Dendritic cell treated with granulocyte-macrophage colony-stimulating factor and Interleukin-4, amounts not matched to agents 40 ng/mL and 50 ng/mL, for 4 days (primary cell): ENCODE measurements at regions of chr2 and their contacts with region 1.

Region 1: GRCh38 chr2:197804049-197804757 is at the start of gene PLCL1:
- H3K4me3 Mint-ChIP-seq: peak within 1 kb of the TSS; percentile 100
- H3K27ac Mint-ChIP-seq: peak within 1 kb of the TSS; percentile 91
- H3K4me1 Mint-ChIP-seq: peaks cover 24% of the 10 kb centered on the region
- H3K27me3 Mint-ChIP-seq: peaks cover 15% of the 10 kb centered on the region

Region 2: GRCh38 chr2:197889041-197889440 is 84.8 kb after region 1 on chr2:
- intact Hi-C with region 1: loop called (anchors 2 kb)
- H3K4me3 Mint-ChIP-seq: no peak overlapping the region
- H3K27ac Mint-ChIP-seq: peak overlapping the region; percentile 91
- H3K4me1 Mint-ChIP-seq: peaks cover 35% of the 10 kb centered on the region
- H3K27me3 Mint-ChIP-seq: no peaks in the 10 kb centered on the region

Region 3: GRCh38 chr2:198053776-198054698 is 249.8 kb after region 1 on chr2:
- intact Hi-C with region 1: loop called (anchors 2 kb)
- H3K4me3 Mint-ChIP-seq: no peak overlapping the region
- H3K27ac Mint-ChIP-seq: no peak overlapping the region
- H3K4me1 Mint-ChIP-seq: peaks cover 7% of the 10 kb centered on the region
- H3K27me3 Mint-ChIP-seq: no peaks in the 10 kb centered on the region

Region 4: GRCh38 chr2:198127627-198128026 is 323.4 kb after region 1 on chr2:
- intact Hi-C with region 1: loop called (anchors 1 kb)
- H3K4me3 Mint-ChIP-seq: no peak overlapping the region
- H3K27ac Mint-ChIP-seq: no peak overlapping the region
- H3K4me1 Mint-ChIP-seq: peaks cover 26% of the 10 kb centered on the region
- H3K27me3 Mint-ChIP-seq: no peaks in the 10 kb centered on the region

Region 5: DNA sequence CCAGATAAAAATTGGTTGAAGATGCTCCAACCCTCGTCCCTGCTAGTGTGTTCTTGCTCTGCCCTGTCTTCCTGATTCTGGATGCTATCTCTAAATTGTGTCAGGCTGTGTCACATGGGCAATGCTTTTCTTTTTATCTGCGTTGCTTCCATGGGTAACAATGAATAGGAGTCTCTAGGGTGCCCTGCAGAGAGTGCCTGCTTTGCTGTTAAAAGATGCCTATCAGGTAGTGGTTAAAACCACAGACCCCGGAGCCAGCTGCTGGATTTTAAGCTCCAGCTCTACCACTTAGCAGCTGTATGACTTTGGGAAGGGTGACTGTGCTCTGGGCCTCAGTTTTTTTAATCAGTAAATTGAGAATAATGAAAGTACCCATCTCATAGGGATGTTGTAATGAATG is 340.5 kb after region 1 on chr2:
- intact Hi-C with region 1: no loop called
- H3K4me3 Mint-ChIP-seq: no peak overlapping the region
- H3K27ac Mint-ChIP-seq: no peak overlapping the region
- H3K4me1 Mint-ChIP-seq: no peaks in the 10 kb centered on the region
- H3K27me3 Mint-ChIP-seq: no peaks in the 10 kb centered on the region

Region 6: GRCh38 chr2:198296665-198297308 is 492.6 kb after region 1 on chr2:
- intact Hi-C with region 1: loop called (anchors 1 kb)
- H3K4me3 Mint-ChIP-seq: no peak overlapping the region
- H3K27ac Mint-ChIP-seq: no peak overlapping the region
- H3K4me1 Mint-ChIP-seq: no peaks in the 10 kb centered on the region
- H3K27me3 Mint-ChIP-seq: peaks cover 4% of the 10 kb centered on the region